ENCODE measurements at regions of chr7 and their contacts with region 1.

Region 1: GRCh38 chr7:112708236-112708635 is 82.0 kb downstream of the TMEM168 start:
- DNase-seq: no peak
- ATAC-seq: no peak
- H3K4me3 ChIP-seq: no peak overlapping the region
- H3K4me3 Mint-ChIP-seq: no peak overlapping the region
- H3K27ac ChIP-seq: no peak overlapping the region
- H3K27ac Mint-ChIP-seq: no peak overlapping the region
- H3K4me1 ChIP-seq: no peaks in the 10 kb centered on the region
- H3K4me1 Mint-ChIP-seq: no peaks in the 10 kb centered on the region
- H3K27me3 ChIP-seq: peaks cover 0 to 3% of the 10 kb centered on the region in 2 experiments
- H3K27me3 Mint-ChIP-seq: no peaks in the 10 kb centered on the region
- CTCF ChIP-seq: no peak

Region 2: DNA sequence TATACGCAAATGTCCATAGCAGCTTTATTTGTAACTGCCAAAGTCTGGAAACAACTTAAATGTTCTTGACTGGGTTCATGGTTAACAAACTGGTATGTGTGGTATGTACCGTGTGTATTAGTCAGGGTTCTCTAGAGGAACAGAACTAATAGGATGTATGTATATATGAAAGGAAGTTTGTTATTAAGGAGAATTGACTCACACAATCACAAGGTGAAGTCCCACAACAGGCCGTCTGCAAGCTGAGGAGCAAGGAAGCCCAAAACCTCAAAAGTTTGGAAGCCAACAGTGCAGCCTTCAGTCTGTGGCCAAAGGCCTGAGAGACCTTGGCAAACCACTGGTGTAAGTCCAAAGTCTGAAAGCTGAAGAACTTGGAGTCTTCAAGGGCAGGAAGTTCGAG is 15.2 kb after region 1 on chr7:
- CTCF ChIA-PET with region 1: no interaction called
- POLR2A ChIA-PET with region 1: no interaction called
- intact Hi-C with region 1: loop called in 1 of 2 experiments (anchors 1 kb)
- DNase-seq: no peak
- ATAC-seq: no peak
- H3K4me3 ChIP-seq: no peak overlapping the region
- H3K4me3 Mint-ChIP-seq: no peak overlapping the region
- H3K27ac ChIP-seq: no peak overlapping the region
- H3K27ac Mint-ChIP-seq: no peak overlapping the region
- H3K4me1 ChIP-seq: no peaks in the 10 kb centered on the region
- H3K4me1 Mint-ChIP-seq: no peaks in the 10 kb centered on the region
- H3K27me3 ChIP-seq: peaks cover 0 to 4% of the 10 kb centered on the region in 2 experiments
- H3K27me3 Mint-ChIP-seq: peaks cover 12% of the 10 kb centered on the region
- CTCF ChIP-seq: no peak

Region 3: DNA sequence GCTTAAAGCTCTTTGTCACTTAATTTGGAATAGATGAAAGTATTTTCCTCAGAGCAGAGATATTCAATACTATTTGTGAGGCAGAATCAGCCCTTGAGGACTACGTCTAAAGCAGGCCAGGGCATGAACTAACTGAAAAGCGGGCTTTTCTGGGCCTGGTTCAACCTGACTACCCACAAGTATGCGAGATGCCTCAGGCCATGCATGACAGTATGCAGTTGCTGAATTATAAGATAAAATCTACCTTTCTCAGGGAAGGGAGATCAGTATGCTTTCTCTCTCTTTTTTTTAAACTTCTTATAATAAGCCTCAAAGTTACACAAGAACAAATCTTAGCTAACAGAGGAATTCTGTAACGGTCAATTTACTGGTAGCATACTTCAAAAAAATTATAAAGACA is 61.8 kb after region 1 on chr7:
- CTCF ChIA-PET with region 1: no interaction called
- POLR2A ChIA-PET with region 1: no interaction called
- intact Hi-C with region 1: no loop called
- DNase-seq: no peak
- ATAC-seq: no peak
- H3K4me3 ChIP-seq: no peak overlapping the region
- H3K4me3 Mint-ChIP-seq: no peak overlapping the region
- H3K27ac ChIP-seq: no peak overlapping the region
- H3K27ac Mint-ChIP-seq: no peak overlapping the region
- H3K4me1 ChIP-seq: no peaks in the 10 kb centered on the region
- H3K4me1 Mint-ChIP-seq: peaks cover 15% of the 10 kb centered on the region
- H3K27me3 ChIP-seq: no peaks in the 10 kb centered on the region
- H3K27me3 Mint-ChIP-seq: no peaks in the 10 kb centered on the region
- CTCF ChIP-seq: no peak

Measured in CD8-positive, alpha-beta T cell (primary cell).